Endothelial cell of umbilical vein (primary cell): ENCODE measurements at regions of chr7 and their contacts with region 1.

Region 1: DNA sequence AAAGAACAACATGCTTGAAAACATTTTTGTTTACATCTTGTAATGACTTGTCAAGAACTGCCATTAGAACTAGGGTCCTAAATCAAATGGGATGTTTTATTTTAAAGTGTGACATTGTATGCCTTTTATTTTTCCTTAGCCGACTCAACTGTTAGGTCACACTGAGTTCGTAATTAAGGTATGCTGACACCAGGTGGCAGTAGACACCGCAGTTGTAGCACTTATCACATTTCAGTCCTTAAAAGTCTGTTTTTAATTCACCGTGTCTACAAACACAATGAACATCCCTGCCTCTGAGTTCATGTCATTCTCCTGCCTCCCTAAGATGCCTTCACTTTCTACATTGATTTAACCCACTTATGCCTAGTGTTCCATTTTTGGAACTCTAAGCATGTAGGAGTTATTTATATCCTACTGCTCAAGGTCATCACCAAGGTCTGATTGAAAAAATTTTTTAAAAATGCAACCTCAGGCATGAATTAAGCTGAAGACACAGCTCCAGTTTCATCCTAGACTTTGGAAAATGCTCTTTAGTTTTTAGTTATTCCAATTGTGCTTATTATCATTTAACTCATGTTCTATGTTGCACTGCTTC is 186.1 kb downstream of the BMPER start:
- DNase-seq: peak; percentile 58
- H3K4me3 ChIP-seq: no peak overlapping the region
- H3K27ac ChIP-seq: no peak overlapping the region
- H3K4me1 ChIP-seq: no peaks in the 10 kb centered on the region
- H3K27me3 ChIP-seq: no peaks in the 10 kb centered on the region
- CTCF ChIP-seq: peak; percentile 44 to 52
- POLR2A ChIP-seq: no peak

Region 2: DNA sequence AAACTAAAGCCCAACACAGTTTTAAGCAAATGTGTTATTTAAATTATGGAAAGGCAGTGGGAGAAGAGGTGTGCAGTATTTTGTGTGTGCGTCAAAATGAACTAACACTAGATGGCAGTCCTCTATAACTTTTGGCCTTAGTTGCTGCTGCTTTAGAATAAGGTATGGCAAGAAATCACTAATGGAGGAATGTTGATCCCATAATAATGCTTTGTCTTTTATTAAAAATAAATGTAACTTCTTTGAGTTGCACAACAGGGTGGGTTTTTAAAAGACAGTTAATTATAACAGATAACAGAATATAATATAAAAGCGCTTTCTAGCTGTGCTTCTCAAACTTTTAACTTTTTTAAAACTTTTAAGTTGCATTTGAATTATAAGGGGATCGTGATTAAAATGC is 905.6 kb before region 1 on chr7:
- CTCF ChIA-PET with region 1: interaction called, 27 read pairs
- POLR2A ChIA-PET with region 1: no interaction called
- dilution Hi-C with region 1: no loop called
- intact Hi-C with region 1: loop called (anchors 2 kb)
- DNase-seq: peak; percentile 63
- H3K4me3 ChIP-seq: no peak overlapping the region
- H3K27ac ChIP-seq: no peak overlapping the region
- H3K4me1 ChIP-seq: no peaks in the 10 kb centered on the region
- H3K27me3 ChIP-seq: no peaks in the 10 kb centered on the region
- CTCF ChIP-seq: peak; percentile 34 to 52
- POLR2A ChIP-seq: no peak

Region 3: GRCh38 chr7:33970536-33970935 is 120.9 kb before region 1 on chr7:
- CTCF ChIA-PET with region 1: interaction called, 11 read pairs
- POLR2A ChIA-PET with region 1: no interaction called
- dilution Hi-C with region 1: no loop called
- intact Hi-C with region 1: no loop called
- DNase-seq: no peak
- H3K4me3 ChIP-seq: no peak overlapping the region
- H3K27ac ChIP-seq: no peak overlapping the region
- H3K4me1 ChIP-seq: no peaks in the 10 kb centered on the region
- H3K27me3 ChIP-seq: no peaks in the 10 kb centered on the region
- CTCF ChIP-seq: no peak
- POLR2A ChIP-seq: no peak

Region 4: DNA sequence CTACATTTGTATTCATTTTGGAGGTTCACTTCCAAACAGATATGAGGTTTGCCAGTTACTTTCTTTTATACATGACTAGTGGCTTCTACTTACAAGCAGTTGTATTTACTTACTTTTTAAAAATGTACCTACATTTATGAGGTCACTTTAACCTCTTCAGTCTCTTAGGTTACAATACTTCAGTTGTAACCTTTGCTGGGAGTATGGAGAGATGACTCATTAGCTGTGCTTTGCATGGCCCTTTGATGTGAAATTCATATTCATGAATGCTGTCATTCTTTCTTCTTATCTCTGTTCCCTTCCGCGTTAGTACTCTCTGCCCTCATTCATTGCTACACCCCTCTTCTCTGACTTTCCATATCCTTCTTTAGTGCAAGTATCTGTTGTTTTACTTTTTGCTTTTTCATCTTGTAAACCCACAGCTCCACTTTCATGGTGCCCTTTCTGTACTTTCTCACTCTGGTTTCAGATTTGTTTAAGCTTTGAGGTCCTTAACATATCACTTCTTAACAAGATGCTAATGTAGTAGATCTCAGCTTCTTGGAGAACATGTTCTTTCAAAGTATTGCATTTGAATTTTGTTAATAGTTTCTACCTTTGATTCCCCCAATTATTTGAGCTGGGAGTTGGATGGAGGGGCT is 21.7 kb before region 1 on chr7:
- CTCF ChIA-PET with region 1: interaction called, 21 read pairs
- POLR2A ChIA-PET with region 1: no interaction called
- dilution Hi-C with region 1: no loop called
- intact Hi-C with region 1: no loop called
- DNase-seq: peak; percentile 62
- H3K4me3 ChIP-seq: no peak overlapping the region
- H3K27ac ChIP-seq: peak overlapping the region; percentile 41
- H3K4me1 ChIP-seq: peaks cover 22% of the 10 kb centered on the region
- H3K27me3 ChIP-seq: no peaks in the 10 kb centered on the region
- CTCF ChIP-seq: no peak
- POLR2A ChIP-seq: no peak

Region 5: DNA sequence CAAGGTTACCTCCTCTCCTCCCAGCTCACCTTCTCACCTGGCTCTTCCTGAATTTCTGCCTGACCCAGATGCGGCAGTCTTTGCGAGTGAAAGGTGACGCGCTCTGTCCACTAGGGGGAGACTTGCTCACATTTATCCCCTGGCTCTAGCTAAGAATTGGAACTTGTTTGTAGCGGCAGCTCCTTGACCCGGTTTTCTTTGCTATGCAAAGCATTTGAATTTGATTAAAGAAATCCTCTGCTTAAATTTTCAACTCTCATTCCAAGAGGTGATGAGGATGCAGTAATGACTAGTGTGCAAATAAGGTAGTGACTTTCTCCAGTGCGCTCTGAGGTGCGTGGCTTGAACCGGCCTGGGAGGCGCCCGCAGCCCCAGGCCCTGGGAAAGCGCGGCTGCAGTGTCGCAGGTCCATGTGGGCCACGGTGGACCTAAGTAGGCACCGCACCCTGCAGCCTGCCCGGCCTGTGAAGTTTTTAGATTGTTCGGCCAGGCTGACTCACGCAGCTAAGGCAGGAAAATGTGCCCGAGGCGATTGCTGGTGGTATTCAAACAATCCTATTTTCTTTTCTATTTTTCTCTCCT is 229.7 kb after region 1 on chr7:
- CTCF ChIA-PET with region 1: no interaction called
- POLR2A ChIA-PET with region 1: no interaction called
- dilution Hi-C with region 1: no loop called
- intact Hi-C with region 1: no loop called
- DNase-seq: peak; percentile 79
- H3K4me3 ChIP-seq: peak overlapping the region in 2 of 3 experiments; percentile 2
- H3K27ac ChIP-seq: no peak overlapping the region
- H3K4me1 ChIP-seq: peaks cover 3% of the 10 kb centered on the region
- H3K27me3 ChIP-seq: no peaks in the 10 kb centered on the region
- CTCF ChIP-seq: peak; percentile 86 to 87
- POLR2A ChIP-seq: no peak

Region 6: GRCh38 chr7:34596892-34597291 is 505.5 kb after region 1 on chr7:
- CTCF ChIA-PET with region 1: interaction called, 10 read pairs
- POLR2A ChIA-PET with region 1: no interaction called
- dilution Hi-C with region 1: no loop called
- intact Hi-C with region 1: no loop called
- DNase-seq: peak; percentile 50
- H3K4me3 ChIP-seq: no peak overlapping the region
- H3K27ac ChIP-seq: no peak overlapping the region
- H3K4me1 ChIP-seq: no peaks in the 10 kb centered on the region
- H3K27me3 ChIP-seq: no peaks in the 10 kb centered on the region
- CTCF ChIP-seq: peak in 1 of 2 donors; percentile 42
- POLR2A ChIP-seq: no peak